ENCODE measurements at regions of chr3 and their contacts with region 1.

Region 1: GRCh38 chr3:67113802-67114407 is 115.8 kb downstream of the KBTBD8 start:
- DNase-seq: peak; percentile 59
- ATAC-seq: peak; percentile 99
- H3K4me3 ChIP-seq: no peak overlapping the region
- H3K27ac ChIP-seq: no peak overlapping the region
- H3K4me1 ChIP-seq: no peaks in the 10 kb centered on the region
- H3K27me3 ChIP-seq: no peaks in the 10 kb centered on the region
- CTCF ChIP-seq: peak; percentile 94 to 98 (median 98)
- EP300 ChIP-seq: no peak
- POLR2A ChIP-seq: no peak
- RAD21 ChIP-seq: peak; percentile 92

Region 2: GRCh38 chr3:66823009-66823397 is 290.9 kb before region 1 on chr3:
- CTCF ChIA-PET with region 1: no interaction called
- POLR2A ChIA-PET with region 1: no interaction called
- RAD21 ChIA-PET with region 1: no interaction called
- SMC1A ChIA-PET with region 1: no interaction called
- in situ Hi-C with region 1: no loop called
- intact Hi-C with region 1: no loop called
- DNase-seq: no peak
- ATAC-seq: no peak
- H3K4me3 ChIP-seq: no peak overlapping the region
- H3K27ac ChIP-seq: no peak overlapping the region
- H3K4me1 ChIP-seq: no peaks in the 10 kb centered on the region
- H3K27me3 ChIP-seq: no peaks in the 10 kb centered on the region; a peak in 1 of 4 replicates
- CTCF ChIP-seq: no peak
- EP300 ChIP-seq: no peak
- POLR2A ChIP-seq: no peak
- RAD21 ChIP-seq: no peak

Region 3: GRCh38 chr3:66938338-66938963 is 175.5 kb before region 1 on chr3:
- CTCF ChIA-PET with region 1: interaction called, 10 read pairs
- POLR2A ChIA-PET with region 1: no interaction called
- RAD21 ChIA-PET with region 1: interaction called, 8 read pairs
- SMC1A ChIA-PET with region 1: interaction called, 3 read pairs
- in situ Hi-C with region 1: no loop called
- intact Hi-C with region 1: no loop called
- DNase-seq: peak; percentile 5
- ATAC-seq: peak; percentile 92
- H3K4me3 ChIP-seq: no peak overlapping the region
- H3K27ac ChIP-seq: no peak overlapping the region
- H3K4me1 ChIP-seq: no peaks in the 10 kb centered on the region
- H3K27me3 ChIP-seq: no peaks in the 10 kb centered on the region
- CTCF ChIP-seq: peak; percentile 69 to 72 (median 72)
- EP300 ChIP-seq: no peak
- POLR2A ChIP-seq: no peak
- RAD21 ChIP-seq: peak; percentile 77

Region 4: DNA sequence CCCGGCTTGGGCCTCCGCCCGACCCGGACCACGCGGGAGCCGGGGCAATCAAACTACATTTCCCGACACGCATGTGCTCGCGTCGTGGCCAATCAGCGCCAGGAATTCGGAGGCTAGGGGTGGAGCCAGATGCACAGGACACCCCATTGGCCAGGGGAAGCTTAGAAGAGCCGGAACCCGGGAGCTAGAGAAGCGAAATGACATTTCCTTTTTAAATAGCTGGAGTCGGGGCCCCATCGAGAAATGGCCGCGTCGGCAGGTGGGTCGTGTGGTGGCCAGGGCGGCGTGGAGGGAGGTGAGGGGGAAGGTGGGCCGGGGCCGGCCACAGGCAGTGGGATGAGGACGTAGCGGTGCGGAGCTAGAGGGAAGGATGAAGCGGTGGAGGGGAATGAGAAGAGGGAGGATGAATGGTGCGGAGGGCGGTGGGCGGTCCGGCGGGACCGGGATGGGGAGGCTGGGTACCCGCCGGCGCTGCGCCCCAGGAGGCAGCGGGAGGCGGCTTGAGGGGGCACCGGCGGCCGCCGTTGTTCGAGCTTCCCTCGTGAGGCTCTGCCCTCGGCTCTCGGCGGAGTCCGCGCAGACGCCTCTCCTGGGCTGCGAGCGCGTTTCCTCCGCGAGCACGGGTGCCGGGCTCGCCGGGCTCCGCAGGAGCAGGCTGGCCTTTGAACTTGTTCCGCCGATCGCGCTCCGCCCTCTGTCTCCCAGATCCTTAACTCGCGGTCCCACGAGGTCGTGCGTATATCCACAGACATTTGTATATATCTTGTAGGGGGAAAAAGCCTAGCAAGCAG is 115.6 kb before region 1 on chr3 and contains the start of gene KBTBD8:
- CTCF ChIA-PET with region 1: interaction called, 13 read pairs
- POLR2A ChIA-PET with region 1: no interaction called
- RAD21 ChIA-PET with region 1: interaction called, 3 read pairs
- SMC1A ChIA-PET with region 1: interaction called, 5 read pairs
- in situ Hi-C with region 1: no loop called
- intact Hi-C with region 1: no loop called
- DNase-seq: peak; percentile 96
- ATAC-seq: peak; percentile 93
- H3K4me3 ChIP-seq: peak within 1 kb of the TSS; percentile 92
- H3K27ac ChIP-seq: peak within 1 kb of the TSS; percentile 74
- H3K4me1 ChIP-seq: peaks cover 8% of the 10 kb centered on the region; the same call in 1 of the 2 replicates
- H3K27me3 ChIP-seq: no peaks in the 10 kb centered on the region
- CTCF ChIP-seq: no peak
- EP300 ChIP-seq: no peak
- POLR2A ChIP-seq: peak; percentile 74; the same call in 1 of the 2 replicates
- RAD21 ChIP-seq: no peak
- polyA plus RNA-seq, gene KBTBD8: 8.5 to 9.2 TPM

Region 5: DNA sequence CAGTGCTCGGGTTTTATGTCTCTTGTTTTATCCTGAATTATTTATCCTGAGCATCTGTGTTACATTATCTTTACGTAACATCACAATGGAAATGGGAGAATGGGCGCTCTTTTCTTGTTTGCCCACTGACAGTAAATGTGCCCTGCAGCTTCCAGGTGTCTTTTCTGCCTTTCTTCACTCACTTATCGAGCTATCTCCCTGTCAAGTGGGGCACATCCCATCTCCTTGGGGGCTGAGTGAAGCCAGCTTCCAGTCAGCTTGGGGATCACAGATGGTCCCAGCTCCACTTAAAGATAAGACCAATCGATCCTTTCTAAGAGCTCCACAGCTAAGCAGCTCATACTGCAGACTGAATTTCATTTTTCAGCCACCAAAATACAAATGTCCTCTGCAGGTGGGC is 10.0 kb after region 1 on chr3:
- CTCF ChIA-PET with region 1: interaction called, 16 read pairs
- POLR2A ChIA-PET with region 1: no interaction called
- RAD21 ChIA-PET with region 1: interaction called, 3 read pairs
- SMC1A ChIA-PET with region 1: interaction called, 5 read pairs
- in situ Hi-C with region 1: no loop called
- intact Hi-C with region 1: no loop called
- DNase-seq: no peak
- ATAC-seq: no peak
- H3K4me3 ChIP-seq: no peak overlapping the region
- H3K27ac ChIP-seq: no peak overlapping the region
- H3K4me1 ChIP-seq: no peaks in the 10 kb centered on the region
- H3K27me3 ChIP-seq: no peaks in the 10 kb centered on the region
- CTCF ChIP-seq: no peak
- EP300 ChIP-seq: no peak
- POLR2A ChIP-seq: no peak
- RAD21 ChIP-seq: no peak

Region 6: GRCh38 chr3:67312155-67312554 is 198.2 kb after region 1 on chr3:
- CTCF ChIA-PET with region 1: no interaction called
- POLR2A ChIA-PET with region 1: no interaction called
- RAD21 ChIA-PET with region 1: no interaction called
- SMC1A ChIA-PET with region 1: no interaction called
- in situ Hi-C with region 1: no loop called
- intact Hi-C with region 1: no loop called
- DNase-seq: no peak
- ATAC-seq: no peak
- H3K4me3 ChIP-seq: no peak overlapping the region
- H3K27ac ChIP-seq: no peak overlapping the region
- H3K4me1 ChIP-seq: no peaks in the 10 kb centered on the region
- H3K27me3 ChIP-seq: no peaks in the 10 kb centered on the region; a peak in 2 of 4 replicates
- CTCF ChIP-seq: no peak
- EP300 ChIP-seq: no peak
- POLR2A ChIP-seq: no peak
- RAD21 ChIP-seq: no peak

Region 7: GRCh38 chr3:67783281-67784250 is 669.7 kb after region 1 on chr3:
- CTCF ChIA-PET with region 1: interaction called, 4 read pairs
- POLR2A ChIA-PET with region 1: no interaction called
- RAD21 ChIA-PET with region 1: interaction called, 13 read pairs
- SMC1A ChIA-PET with region 1: interaction called, 13 read pairs
- in situ Hi-C with region 1: loop called (anchors 10 kb)
- intact Hi-C with region 1: no loop called
- DNase-seq: no peak
- ATAC-seq: no peak
- H3K4me3 ChIP-seq: no peak overlapping the region
- H3K27ac ChIP-seq: no peak overlapping the region
- H3K4me1 ChIP-seq: no peaks in the 10 kb centered on the region
- H3K27me3 ChIP-seq: no peaks in the 10 kb centered on the region
- CTCF ChIP-seq: no peak
- EP300 ChIP-seq: no peak
- POLR2A ChIP-seq: no peak
- RAD21 ChIP-seq: no peak

Region 8: GRCh38 chr3:68876112-68876713 is 1762.3 kb after region 1 on chr3:
- CTCF ChIA-PET with region 1: interaction called, 42 read pairs
- POLR2A ChIA-PET with region 1: no interaction called
- RAD21 ChIA-PET with region 1: interaction called, 7 read pairs
- SMC1A ChIA-PET with region 1: interaction called, 20 read pairs
- in situ Hi-C with region 1: no loop called
- intact Hi-C with region 1: loop called (anchors 5 kb)
- DNase-seq: peak; percentile 17
- ATAC-seq: peak; percentile 91
- H3K4me3 ChIP-seq: no peak overlapping the region
- H3K27ac ChIP-seq: no peak overlapping the region
- H3K4me1 ChIP-seq: no peaks in the 10 kb centered on the region
- H3K27me3 ChIP-seq: peaks cover 0 to 3% of the 10 kb centered on the region in 2 experiments; a peak in 1 of 4 replicates
- CTCF ChIP-seq: peak; percentile 80 to 87 (median 82)
- EP300 ChIP-seq: no peak
- POLR2A ChIP-seq: no peak
- RAD21 ChIP-seq: peak; percentile 92